B cell (primary cell): ENCODE measurements at regions of chr6 and their contacts with region 1.

Region 1: GRCh38 chr6:53484476-53485280 is 60.2 kb downstream of the GCLC start:
- DNase-seq: peak; percentile 86
- ATAC-seq: peak; percentile 76
- H3K4me3 ChIP-seq: peak overlapping the region in 1 of 5 experiments; percentile 0
- H3K4me3 Mint-ChIP-seq: peak overlapping the region; percentile 13
- H3K27ac ChIP-seq: no peak overlapping the region
- H3K27ac Mint-ChIP-seq: peak overlapping the region; percentile 6
- H3K4me1 ChIP-seq: peaks cover 42 to 46% of the 10 kb centered on the region in 2 donors
- H3K4me1 Mint-ChIP-seq: peaks cover 58% of the 10 kb centered on the region
- H3K27me3 ChIP-seq: peaks cover 0 to 2% (median 0%) of the 10 kb centered on the region in 4 experiments
- H3K27me3 Mint-ChIP-seq: peaks cover 16% of the 10 kb centered on the region
- CTCF ChIP-seq: peak; percentile 99

Region 2: DNA sequence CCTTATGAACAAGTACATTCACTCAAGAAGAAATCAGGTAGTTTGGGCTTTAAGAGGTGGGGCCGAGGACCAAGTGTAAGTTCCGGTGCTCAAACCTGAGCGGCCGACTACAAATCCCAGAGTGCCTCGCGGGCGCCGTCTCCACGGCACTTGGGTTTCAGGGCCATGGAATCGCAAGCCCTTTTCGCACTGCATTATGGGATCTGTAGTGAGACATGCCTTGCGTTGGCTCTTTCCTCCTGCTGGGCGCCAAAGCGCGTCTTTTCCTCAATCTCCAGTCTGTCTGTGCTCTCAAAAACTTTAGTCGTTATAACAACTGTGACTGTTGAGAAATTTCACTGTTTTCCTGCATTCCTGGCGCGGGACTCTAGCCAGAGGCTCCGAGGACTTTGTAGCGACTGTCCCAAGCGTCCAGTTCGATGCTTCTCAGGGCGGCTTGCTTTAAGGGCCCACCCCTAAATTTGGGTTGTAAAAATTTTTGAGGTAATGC is 419.9 kb before region 1 on chr6:
- CTCF ChIA-PET with region 1: interaction called, 6 read pairs
- POLR2A ChIA-PET with region 1: no interaction called
- intact Hi-C with region 1: loop called (anchors 5 kb)
- DNase-seq: peak; percentile 96
- ATAC-seq: peak; percentile 82
- H3K4me3 ChIP-seq: peak overlapping the region; percentile 83 to 99 (median 84)
- H3K4me3 Mint-ChIP-seq: peak overlapping the region; percentile 100
- H3K27ac ChIP-seq: peak overlapping the region; percentile 61 to 76
- H3K27ac Mint-ChIP-seq: peak overlapping the region; percentile 99
- H3K4me1 ChIP-seq: peaks cover 38 to 40% of the 10 kb centered on the region in 2 donors
- H3K4me1 Mint-ChIP-seq: peaks cover 63% of the 10 kb centered on the region
- H3K27me3 ChIP-seq: no peaks in the 10 kb centered on the region
- H3K27me3 Mint-ChIP-seq: no peaks in the 10 kb centered on the region
- CTCF ChIP-seq: no peak

Region 3: GRCh38 chr6:53342217-53342616 is 142.5 kb before region 1 on chr6:
- CTCF ChIA-PET with region 1: interaction called, 10 read pairs
- POLR2A ChIA-PET with region 1: no interaction called
- intact Hi-C with region 1: no loop called
- DNase-seq: no peak
- ATAC-seq: peak; percentile 29
- H3K4me3 ChIP-seq: peak overlapping the region in 2 of 5 experiments; percentile 3 to 33
- H3K4me3 Mint-ChIP-seq: peak overlapping the region; percentile 77
- H3K27ac ChIP-seq: peak overlapping the region in 1 of 2 donors; percentile 76
- H3K27ac Mint-ChIP-seq: peak overlapping the region; percentile 89
- H3K4me1 ChIP-seq: peaks cover 88 to 91% of the 10 kb centered on the region in 2 donors
- H3K4me1 Mint-ChIP-seq: peaks cover 94% of the 10 kb centered on the region
- H3K27me3 ChIP-seq: no peaks in the 10 kb centered on the region
- H3K27me3 Mint-ChIP-seq: no peaks in the 10 kb centered on the region
- CTCF ChIP-seq: no peak

Region 4: GRCh38 chr6:53432318-53433161 is 52.1 kb before region 1 on chr6:
- CTCF ChIA-PET with region 1: interaction called, 14 read pairs
- POLR2A ChIA-PET with region 1: no interaction called
- intact Hi-C with region 1: loop called (anchors 1 kb)
- DNase-seq: no peak
- ATAC-seq: no peak
- H3K4me3 ChIP-seq: no peak overlapping the region
- H3K4me3 Mint-ChIP-seq: no peak overlapping the region
- H3K27ac ChIP-seq: no peak overlapping the region
- H3K27ac Mint-ChIP-seq: no peak overlapping the region
- H3K4me1 ChIP-seq: peaks cover 0 to 6% of the 10 kb centered on the region in 2 donors
- H3K4me1 Mint-ChIP-seq: peaks cover 15% of the 10 kb centered on the region
- H3K27me3 ChIP-seq: no peaks in the 10 kb centered on the region
- H3K27me3 Mint-ChIP-seq: no peaks in the 10 kb centered on the region
- CTCF ChIP-seq: no peak

Region 5: GRCh38 chr6:53651764-53652401 is 167.2 kb after region 1 on chr6:
- CTCF ChIA-PET with region 1: interaction called, 10 read pairs
- POLR2A ChIA-PET with region 1: no interaction called
- intact Hi-C with region 1: no loop called
- DNase-seq: peak; percentile 87
- ATAC-seq: peak; percentile 83
- H3K4me3 ChIP-seq: peak overlapping the region; percentile 64 to 96 (median 79)
- H3K4me3 Mint-ChIP-seq: peak overlapping the region; percentile 96
- H3K27ac ChIP-seq: peak overlapping the region; percentile 9 to 51
- H3K27ac Mint-ChIP-seq: peak overlapping the region; percentile 90
- H3K4me1 ChIP-seq: peaks cover 20 to 26% of the 10 kb centered on the region in 2 donors
- H3K4me1 Mint-ChIP-seq: peaks cover 20% of the 10 kb centered on the region
- H3K27me3 ChIP-seq: peaks cover 0 to 6% (median 0%) of the 10 kb centered on the region in 4 experiments
- H3K27me3 Mint-ChIP-seq: no peaks in the 10 kb centered on the region
- CTCF ChIP-seq: peak; percentile 24

Region 6: DNA sequence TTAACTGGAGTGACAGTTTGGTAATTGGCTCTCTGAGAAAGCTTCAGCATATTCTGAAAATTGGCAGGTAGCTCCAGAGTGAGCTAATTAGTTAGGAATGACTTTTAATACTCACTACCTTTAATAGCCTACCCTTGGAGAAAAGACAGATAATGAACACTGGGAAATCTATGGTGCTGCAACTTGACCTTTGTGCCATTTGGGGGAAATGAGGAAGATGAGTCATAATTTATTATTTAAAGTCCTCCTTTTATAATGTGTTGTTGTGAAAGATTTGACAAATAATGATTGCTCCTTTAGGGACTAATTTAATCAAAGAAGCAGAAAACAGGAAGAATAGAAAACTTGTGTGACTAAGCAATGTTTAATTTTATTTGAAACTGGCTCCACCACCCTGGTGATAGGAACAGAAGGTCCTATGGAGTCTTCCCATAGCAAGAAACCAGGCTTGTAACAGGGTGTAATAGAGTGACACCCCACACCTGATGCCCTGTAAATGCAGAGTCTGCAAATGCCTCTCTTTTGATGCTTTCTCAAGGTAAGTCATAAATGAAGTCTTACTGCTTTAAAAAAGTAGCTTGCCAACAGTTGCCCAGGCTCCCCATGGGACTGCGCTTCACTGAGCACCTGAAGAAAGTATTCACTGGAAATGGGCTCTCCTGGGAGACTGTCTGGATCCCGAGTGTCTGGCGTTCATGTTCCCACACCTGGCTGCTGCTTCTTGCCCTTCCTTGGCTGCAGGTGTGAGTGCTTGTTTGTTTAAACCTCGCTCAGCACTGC is 444.6 kb after region 1 on chr6:
- CTCF ChIA-PET with region 1: no interaction called
- POLR2A ChIA-PET with region 1: no interaction called
- intact Hi-C with region 1: no loop called
- DNase-seq: no peak
- ATAC-seq: no peak
- H3K4me3 ChIP-seq: no peak overlapping the region
- H3K4me3 Mint-ChIP-seq: no peak overlapping the region
- H3K27ac ChIP-seq: no peak overlapping the region
- H3K27ac Mint-ChIP-seq: no peak overlapping the region
- H3K4me1 ChIP-seq: no peaks in the 10 kb centered on the region
- H3K4me1 Mint-ChIP-seq: no peaks in the 10 kb centered on the region
- H3K27me3 ChIP-seq: no peaks in the 10 kb centered on the region
- H3K27me3 Mint-ChIP-seq: no peaks in the 10 kb centered on the region
- CTCF ChIP-seq: no peak